Endothelial cell of umbilical vein (primary cell): ENCODE measurements at regions of chr10 and their contacts with region 1.

Region 1: DNA sequence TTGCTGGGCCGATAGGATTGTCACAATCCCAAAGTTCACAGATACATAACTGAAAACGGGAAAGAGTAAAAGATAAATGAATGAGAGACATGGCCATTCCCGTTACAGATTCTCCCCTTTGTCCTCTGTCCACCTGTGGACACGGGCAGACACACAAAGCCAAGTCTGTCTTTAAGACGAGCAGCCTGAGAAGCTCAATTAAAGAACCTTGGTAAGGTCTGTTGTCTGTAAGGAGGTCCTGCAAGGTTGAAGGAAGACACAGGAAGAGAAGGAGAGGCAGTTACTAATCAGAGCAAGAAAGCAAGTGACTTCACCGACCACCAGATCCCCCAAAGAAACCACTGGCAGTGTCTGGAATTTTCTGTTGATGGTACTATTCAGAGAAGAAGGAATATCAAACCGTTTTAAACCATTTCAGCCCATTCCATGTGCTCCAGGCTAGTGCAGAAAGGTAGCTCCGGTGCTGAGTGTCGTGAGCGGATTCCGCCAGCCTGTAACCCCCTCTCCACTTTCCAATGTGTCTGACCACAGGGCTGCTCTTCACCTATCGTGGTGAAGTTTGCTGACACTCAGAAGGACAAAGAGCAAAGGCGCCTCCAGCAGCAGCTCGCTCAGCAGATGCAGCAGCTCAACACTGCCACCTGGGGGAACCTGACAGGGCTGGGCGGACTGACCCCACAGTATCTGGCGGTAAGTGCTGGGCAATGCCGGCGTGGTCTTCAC is 252.6 kb downstream of the CELF2 start:
- DNase-seq: peak; percentile 81
- H3K4me3 ChIP-seq: no peak overlapping the region
- H3K27ac ChIP-seq: no peak overlapping the region
- H3K4me1 ChIP-seq: no peaks in the 10 kb centered on the region
- H3K27me3 ChIP-seq: no peaks in the 10 kb centered on the region
- CTCF ChIP-seq: peak; percentile 96 to 98
- POLR2A ChIP-seq: no peak

Region 2: DNA sequence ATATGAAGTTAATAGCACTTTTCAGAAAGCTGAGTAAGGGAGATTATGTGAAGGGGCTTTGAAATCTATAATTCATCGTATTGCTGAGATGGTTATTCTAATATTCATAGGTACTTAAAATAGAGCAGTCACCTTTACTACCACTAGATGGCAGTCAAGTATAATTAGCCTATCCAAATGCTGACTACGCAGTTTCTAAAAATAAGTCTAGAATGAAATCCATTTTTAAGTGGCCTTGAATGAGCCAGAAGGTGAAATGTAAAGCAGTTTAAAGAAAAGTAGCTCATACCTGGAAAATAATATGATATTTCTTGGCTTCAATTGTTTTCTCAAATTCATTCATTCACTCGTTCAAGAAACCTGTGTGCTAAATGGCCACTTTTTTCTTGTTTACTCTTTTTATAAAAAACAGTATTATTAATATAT is 1938.7 kb before region 1 on chr10:
- CTCF ChIA-PET with region 1: interaction called, 11 read pairs
- POLR2A ChIA-PET with region 1: no interaction called
- dilution Hi-C with region 1: no loop called
- intact Hi-C with region 1: loop called (anchors 1 kb)
- DNase-seq: peak; percentile 62
- H3K4me3 ChIP-seq: no peak overlapping the region
- H3K27ac ChIP-seq: no peak overlapping the region
- H3K4me1 ChIP-seq: no peaks in the 10 kb centered on the region
- H3K27me3 ChIP-seq: peaks cover 0 to 2% of the 10 kb centered on the region in 2 experiments
- CTCF ChIP-seq: peak; percentile 37 to 54
- POLR2A ChIP-seq: no peak

Region 3: GRCh38 chr10:9608602-9609001 is 1661.7 kb before region 1 on chr10:
- CTCF ChIA-PET with region 1: interaction called, 27 read pairs
- POLR2A ChIA-PET with region 1: no interaction called
- dilution Hi-C with region 1: no loop called
- intact Hi-C with region 1: loop called (anchors 5 kb)
- DNase-seq: peak; percentile 14
- H3K4me3 ChIP-seq: no peak overlapping the region
- H3K27ac ChIP-seq: no peak overlapping the region
- H3K4me1 ChIP-seq: peaks cover 2% of the 10 kb centered on the region
- H3K27me3 ChIP-seq: no peaks in the 10 kb centered on the region
- CTCF ChIP-seq: no peak
- POLR2A ChIP-seq: no peak

Region 4: GRCh38 chr10:10677479-10677878 is 592.8 kb before region 1 on chr10:
- CTCF ChIA-PET with region 1: interaction called, 5 read pairs
- POLR2A ChIA-PET with region 1: no interaction called
- dilution Hi-C with region 1: no loop called
- intact Hi-C with region 1: loop called (anchors 1 kb)
- DNase-seq: peak; percentile 50
- H3K4me3 ChIP-seq: no peak overlapping the region
- H3K27ac ChIP-seq: no peak overlapping the region
- H3K4me1 ChIP-seq: no peaks in the 10 kb centered on the region
- H3K27me3 ChIP-seq: no peaks in the 10 kb centered on the region
- CTCF ChIP-seq: peak; percentile 19 to 25
- POLR2A ChIP-seq: no peak

Region 5: DNA sequence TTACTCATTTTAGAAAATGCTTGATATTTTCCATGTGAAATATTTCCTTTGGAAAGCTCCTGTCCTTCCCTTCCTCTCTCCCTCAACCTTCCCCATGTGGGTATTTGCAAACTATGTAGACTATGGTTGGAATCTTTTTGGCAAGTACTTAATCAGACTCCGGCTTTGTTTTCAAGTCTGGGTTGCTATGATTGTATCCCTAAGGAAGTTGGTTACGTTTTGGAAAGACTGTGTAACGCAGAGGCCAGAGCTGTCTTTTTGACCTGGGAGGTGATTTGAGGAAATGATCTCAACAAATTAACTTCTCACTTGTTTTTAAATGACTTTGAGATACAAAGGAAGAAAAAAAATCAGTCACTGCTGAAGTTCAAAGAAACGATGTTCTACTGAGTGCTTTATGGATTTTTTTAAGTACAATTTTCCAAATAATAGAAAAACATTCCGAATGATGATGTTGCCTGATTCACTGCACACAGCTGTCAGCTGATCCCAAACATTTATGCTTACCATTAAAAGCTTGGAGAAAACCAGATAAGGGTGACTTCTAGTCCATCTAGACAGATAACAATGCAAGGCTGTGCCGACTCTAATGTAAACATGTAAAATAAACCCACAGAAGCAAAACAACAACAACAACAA is 398.1 kb before region 1 on chr10:
- CTCF ChIA-PET with region 1: interaction called, 3 read pairs
- POLR2A ChIA-PET with region 1: no interaction called
- dilution Hi-C with region 1: no loop called
- intact Hi-C with region 1: loop called (anchors 1 kb)
- DNase-seq: peak; percentile 99
- H3K4me3 ChIP-seq: peak overlapping the region in 1 of 3 experiments; percentile 25
- H3K27ac ChIP-seq: peak overlapping the region; percentile 99
- H3K4me1 ChIP-seq: peaks cover 35% of the 10 kb centered on the region
- H3K27me3 ChIP-seq: no peaks in the 10 kb centered on the region
- CTCF ChIP-seq: no peak
- POLR2A ChIP-seq: no peak

Region 6: GRCh38 chr10:11113156-11113555 is 157.1 kb before region 1 on chr10:
- CTCF ChIA-PET with region 1: interaction called, 8 read pairs
- POLR2A ChIA-PET with region 1: no interaction called
- dilution Hi-C with region 1: no loop called
- intact Hi-C with region 1: loop called (anchors 1 kb)
- DNase-seq: no peak
- H3K4me3 ChIP-seq: no peak overlapping the region
- H3K27ac ChIP-seq: no peak overlapping the region
- H3K4me1 ChIP-seq: no peaks in the 10 kb centered on the region
- H3K27me3 ChIP-seq: no peaks in the 10 kb centered on the region
- CTCF ChIP-seq: peak in 1 of 2 donors; percentile 4
- POLR2A ChIP-seq: no peak

Region 7: GRCh38 chr10:11178606-11179515 is 91.4 kb before region 1 on chr10:
- CTCF ChIA-PET with region 1: interaction called, 10 read pairs
- POLR2A ChIA-PET with region 1: no interaction called
- dilution Hi-C with region 1: no loop called
- intact Hi-C with region 1: no loop called
- DNase-seq: peak; percentile 49
- H3K4me3 ChIP-seq: no peak overlapping the region
- H3K27ac ChIP-seq: no peak overlapping the region
- H3K4me1 ChIP-seq: peaks cover 6% of the 10 kb centered on the region
- H3K27me3 ChIP-seq: no peaks in the 10 kb centered on the region
- CTCF ChIP-seq: no peak
- POLR2A ChIP-seq: no peak

Region 8: GRCh38 chr10:11367505-11367904 is 97.2 kb after region 1 on chr10:
- CTCF ChIA-PET with region 1: no interaction called
- POLR2A ChIA-PET with region 1: no interaction called
- dilution Hi-C with region 1: no loop called
- intact Hi-C with region 1: no loop called
- DNase-seq: no peak
- H3K4me3 ChIP-seq: no peak overlapping the region
- H3K27ac ChIP-seq: no peak overlapping the region
- H3K4me1 ChIP-seq: no peaks in the 10 kb centered on the region
- H3K27me3 ChIP-seq: no peaks in the 10 kb centered on the region
- CTCF ChIP-seq: no peak
- POLR2A ChIP-seq: no peak